HAP-1 (cell line): ENCODE measurements at regions of chr2 and their contacts with region 1.

Region 1: GRCh38 chr2:45497355-45497754 is 113.7 kb downstream of the SRBD1 start:
- DNase-seq: peak; percentile 37 to 38
- H3K4me3 ChIP-seq: no peak overlapping the region
- H3K4me1 ChIP-seq: peaks cover 7% of the 10 kb centered on the region
- H3K27me3 ChIP-seq: no peaks in the 10 kb centered on the region

Region 2: GRCh38 chr2:44928483-44929158 is 568.7 kb before region 1 on chr2:
- in situ Hi-C with region 1: no loop called
- DNase-seq: no peak
- H3K4me3 ChIP-seq: no peak overlapping the region
- H3K4me1 ChIP-seq: peaks cover 19% of the 10 kb centered on the region
- H3K27me3 ChIP-seq: no peaks in the 10 kb centered on the region

Region 3: GRCh38 chr2:44981136-44982108 is 515.9 kb before region 1 on chr2:
- in situ Hi-C with region 1: loop called (anchors 5 kb)
- DNase-seq: peak; percentile 54 to 87
- H3K4me3 ChIP-seq: no peak overlapping the region
- H3K4me1 ChIP-seq: no peaks in the 10 kb centered on the region
- H3K27me3 ChIP-seq: peaks cover 3% of the 10 kb centered on the region; the same call in 1 of the 2 replicates

Region 4: GRCh38 chr2:45813003-45813941 is 315.9 kb after region 1 on chr2:
- in situ Hi-C with region 1: no loop called
- DNase-seq: no peak
- H3K4me3 ChIP-seq: no peak overlapping the region
- H3K4me1 ChIP-seq: peaks cover 28% of the 10 kb centered on the region
- H3K27me3 ChIP-seq: no peaks in the 10 kb centered on the region